Activated CD4-positive, alpha-beta T cell treated with anti-CD3 and anti-CD28 coated beads, Interleukin-2, amount 10 ng/mL, durations not matched to agents 7 days and 5 days (primary cell): ENCODE measurements at regions of chr6 and their contacts with region 1.

Region 1: GRCh38 chr6:37018198-37019064 is 13.0 kb downstream of the FGD2 start:
- DNase-seq: peak; percentile 95
- H3K4me3 Mint-ChIP-seq: no peak overlapping the region
- H3K27ac Mint-ChIP-seq: peak overlapping the region; percentile 85
- H3K4me1 Mint-ChIP-seq: peaks cover 54% of the 10 kb centered on the region
- H3K27me3 Mint-ChIP-seq: no peaks in the 10 kb centered on the region

Region 2: DNA sequence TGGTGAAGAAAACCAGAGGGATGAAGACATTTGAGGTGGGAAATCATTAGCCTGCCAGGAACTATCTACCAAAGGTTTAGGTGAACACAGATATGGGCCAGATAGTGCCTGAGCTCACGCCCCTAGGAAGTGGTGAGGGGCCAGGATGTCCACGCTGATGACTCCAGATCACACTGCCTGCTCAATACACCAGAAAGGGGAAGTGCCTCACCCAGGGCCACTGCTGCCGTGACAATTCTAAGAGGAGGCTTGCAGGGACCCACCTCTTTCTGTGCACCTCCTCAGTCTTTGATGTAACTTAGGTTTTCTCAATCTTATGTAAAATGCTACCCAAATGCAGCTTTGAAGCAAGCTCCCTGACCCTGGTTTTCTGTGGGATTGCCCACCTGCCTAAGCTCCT is 326.2 kb before region 1 on chr6:
- CTCF ChIA-PET with region 1: no interaction called
- POLR2A ChIA-PET with region 1: no interaction called
- DNase-seq: peak; percentile 70
- H3K4me3 Mint-ChIP-seq: no peak overlapping the region
- H3K27ac Mint-ChIP-seq: peak overlapping the region; percentile 83
- H3K4me1 Mint-ChIP-seq: peaks cover 47% of the 10 kb centered on the region
- H3K27me3 Mint-ChIP-seq: no peaks in the 10 kb centered on the region

Region 3: DNA sequence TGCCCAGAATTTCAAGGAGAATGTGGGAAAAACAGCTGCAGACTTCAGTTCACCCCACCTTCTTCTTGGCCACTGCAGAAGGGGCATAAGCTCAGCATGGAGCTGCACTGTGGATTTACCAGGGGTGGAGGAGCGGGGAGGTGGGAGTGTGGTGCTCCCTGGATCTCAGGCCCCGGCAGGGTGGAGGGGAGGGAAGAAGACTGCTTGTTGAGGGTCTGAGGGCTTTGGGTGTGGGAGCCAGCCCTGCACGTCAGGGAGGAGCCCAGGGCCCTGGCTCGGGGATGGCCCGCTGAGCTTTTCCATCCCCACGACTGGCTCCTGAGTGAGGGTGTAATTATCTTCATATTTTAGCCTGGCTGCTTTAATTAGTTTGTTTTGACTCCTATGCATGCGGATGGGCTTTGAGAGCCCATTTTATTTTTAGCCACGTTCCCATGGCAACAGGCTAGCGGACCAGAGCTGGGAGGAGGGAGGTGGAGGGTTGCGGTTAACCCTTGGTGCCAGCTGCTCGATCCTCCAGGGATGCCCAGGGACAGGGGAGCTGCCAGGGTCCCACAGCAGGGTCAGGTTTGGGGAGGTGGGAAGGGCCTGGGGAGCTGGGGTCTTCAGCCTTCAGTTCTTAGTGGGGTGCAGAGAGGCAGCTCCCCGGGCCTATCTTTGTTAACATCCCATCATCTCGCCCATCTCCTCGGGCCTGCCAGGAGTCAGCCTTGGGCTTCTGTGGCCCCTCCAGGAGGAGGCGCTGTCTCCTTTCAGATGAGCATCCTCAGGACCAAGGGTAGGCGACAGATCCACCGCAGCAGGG is 252.6 kb before region 1 on chr6:
- CTCF ChIA-PET with region 1: interaction called, 60 read pairs
- POLR2A ChIA-PET with region 1: no interaction called
- DNase-seq: peak; percentile 89
- H3K4me3 Mint-ChIP-seq: no peak overlapping the region
- H3K27ac Mint-ChIP-seq: no peak overlapping the region
- H3K4me1 Mint-ChIP-seq: peaks cover 42% of the 10 kb centered on the region
- H3K27me3 Mint-ChIP-seq: no peaks in the 10 kb centered on the region

Region 4: GRCh38 chr6:36874443-36875249 is 143.8 kb before region 1 on chr6 and contains the start of gene PPIL1:
- CTCF ChIA-PET with region 1: interaction called, 25 read pairs
- POLR2A ChIA-PET with region 1: no interaction called
- DNase-seq: peak; percentile 86
- H3K4me3 Mint-ChIP-seq: peak within 1 kb of the TSS; percentile 88
- H3K27ac Mint-ChIP-seq: peak within 1 kb of the TSS; percentile 97
- H3K4me1 Mint-ChIP-seq: peaks cover 59% of the 10 kb centered on the region
- H3K27me3 Mint-ChIP-seq: peaks cover 10% of the 10 kb centered on the region
- total RNA-seq, gene PPIL1: 27.0 to 29.3 TPM

Region 5: GRCh38 chr6:36997811-36998722 is 20.4 kb before region 1 on chr6:
- CTCF ChIA-PET with region 1: interaction called, 18 read pairs
- POLR2A ChIA-PET with region 1: no interaction called
- DNase-seq: no peak
- H3K4me3 Mint-ChIP-seq: no peak overlapping the region
- H3K27ac Mint-ChIP-seq: no peak overlapping the region
- H3K4me1 Mint-ChIP-seq: no peaks in the 10 kb centered on the region
- H3K27me3 Mint-ChIP-seq: peaks cover 14% of the 10 kb centered on the region

Region 6: DNA sequence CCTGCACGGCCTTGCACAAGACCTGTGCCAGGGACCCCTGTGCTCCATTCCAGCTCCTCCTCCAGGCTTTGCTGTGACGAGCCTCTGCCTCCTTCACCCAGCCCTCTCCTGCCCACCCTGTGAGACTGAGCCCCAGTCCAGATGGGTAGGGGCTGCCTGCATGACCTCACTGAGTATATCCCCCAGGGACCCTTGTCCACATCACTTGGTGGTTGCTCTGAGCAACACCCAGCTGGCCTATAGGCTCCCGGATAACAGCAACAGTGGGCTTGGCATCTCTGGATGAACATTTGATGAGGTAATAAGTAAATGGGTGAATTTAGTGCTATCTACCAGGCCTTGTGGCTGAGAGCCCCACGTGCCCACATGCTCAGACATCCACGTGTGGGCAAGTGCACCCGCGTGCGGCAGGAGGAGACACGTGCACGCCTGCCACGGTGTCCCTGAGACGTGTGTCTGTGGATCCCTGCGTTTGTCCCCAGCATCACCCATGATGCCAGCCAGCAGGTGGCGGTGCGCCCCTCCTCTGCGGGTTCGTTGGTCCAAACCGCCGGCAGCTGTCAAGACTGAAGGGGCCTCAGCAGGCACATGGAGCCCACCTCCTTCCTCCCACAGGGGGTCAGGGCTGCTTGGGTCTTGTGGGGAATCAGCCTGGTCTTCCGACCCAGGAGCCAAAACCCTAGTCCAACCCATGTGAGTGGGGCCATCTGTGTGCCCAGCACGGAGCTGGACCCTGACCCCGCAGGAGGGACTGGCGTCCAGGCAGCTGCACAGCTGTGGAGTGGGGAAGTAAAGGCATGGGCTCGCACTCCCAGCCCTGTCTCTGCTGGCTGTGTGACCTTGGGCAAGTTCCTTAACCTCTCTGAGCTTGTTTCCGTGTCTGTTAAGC is 33.0 kb after region 1 on chr6:
- CTCF ChIA-PET with region 1: interaction called, 439 read pairs
- POLR2A ChIA-PET with region 1: interaction called, 4 read pairs
- DNase-seq: peak; percentile 91
- H3K4me3 Mint-ChIP-seq: peak overlapping the region; percentile 76
- H3K27ac Mint-ChIP-seq: peak overlapping the region; percentile 92
- H3K4me1 Mint-ChIP-seq: peaks cover 75% of the 10 kb centered on the region
- H3K27me3 Mint-ChIP-seq: no peaks in the 10 kb centered on the region

Region 7: GRCh38 chr6:37182736-37183590 is 164.5 kb after region 1 on chr6:
- CTCF ChIA-PET with region 1: interaction called, 347 read pairs
- POLR2A ChIA-PET with region 1: no interaction called
- DNase-seq: peak; percentile 83
- H3K4me3 Mint-ChIP-seq: peak overlapping the region; percentile 60
- H3K27ac Mint-ChIP-seq: peak overlapping the region; percentile 94
- H3K4me1 Mint-ChIP-seq: peaks cover 70% of the 10 kb centered on the region
- H3K27me3 Mint-ChIP-seq: no peaks in the 10 kb centered on the region

Region 8: GRCh38 chr6:37207903-37208456 is 189.5 kb after region 1 on chr6:
- CTCF ChIA-PET with region 1: interaction called, 482 read pairs
- POLR2A ChIA-PET with region 1: interaction called, 10 read pairs
- DNase-seq: peak; percentile 93
- H3K4me3 Mint-ChIP-seq: peak overlapping the region; percentile 6
- H3K27ac Mint-ChIP-seq: peak overlapping the region; percentile 86
- H3K4me1 Mint-ChIP-seq: peaks cover 76% of the 10 kb centered on the region
- H3K27me3 Mint-ChIP-seq: no peaks in the 10 kb centered on the region